Activated T-helper 2 cell treated with anti-CD3 and anti-CD28 coated beads, Interferon-gamma antibody, Interleukin-2, Interleukin-4, amounts not matched to agents 10 μg/mL and 5 μg/mL and 100 μg/mL, durations not matched to agents 14 hours and 24 hours and 36 hours (primary cell): ENCODE measurements at regions of chr1 and their contacts with region 1.

Region 1: GRCh38 chr1:86380257-86380861 is 15.8 kb downstream of the ODF2L start:
- DNase-seq: no peak
- H3K4me3 Mint-ChIP-seq: no peak overlapping the region
- H3K27ac Mint-ChIP-seq: no peak overlapping the region
- H3K4me1 Mint-ChIP-seq: peaks cover 11% of the 10 kb centered on the region
- H3K27me3 Mint-ChIP-seq: no peaks in the 10 kb centered on the region

Region 2: GRCh38 chr1:86339014-86339812 is 41.1 kb before region 1 on chr1:
- intact Hi-C with region 1: no loop called
- DNase-seq: no peak
- H3K4me3 Mint-ChIP-seq: no peak overlapping the region
- H3K27ac Mint-ChIP-seq: no peak overlapping the region
- H3K4me1 Mint-ChIP-seq: no peaks in the 10 kb centered on the region
- H3K27me3 Mint-ChIP-seq: no peaks in the 10 kb centered on the region

Region 3: DNA sequence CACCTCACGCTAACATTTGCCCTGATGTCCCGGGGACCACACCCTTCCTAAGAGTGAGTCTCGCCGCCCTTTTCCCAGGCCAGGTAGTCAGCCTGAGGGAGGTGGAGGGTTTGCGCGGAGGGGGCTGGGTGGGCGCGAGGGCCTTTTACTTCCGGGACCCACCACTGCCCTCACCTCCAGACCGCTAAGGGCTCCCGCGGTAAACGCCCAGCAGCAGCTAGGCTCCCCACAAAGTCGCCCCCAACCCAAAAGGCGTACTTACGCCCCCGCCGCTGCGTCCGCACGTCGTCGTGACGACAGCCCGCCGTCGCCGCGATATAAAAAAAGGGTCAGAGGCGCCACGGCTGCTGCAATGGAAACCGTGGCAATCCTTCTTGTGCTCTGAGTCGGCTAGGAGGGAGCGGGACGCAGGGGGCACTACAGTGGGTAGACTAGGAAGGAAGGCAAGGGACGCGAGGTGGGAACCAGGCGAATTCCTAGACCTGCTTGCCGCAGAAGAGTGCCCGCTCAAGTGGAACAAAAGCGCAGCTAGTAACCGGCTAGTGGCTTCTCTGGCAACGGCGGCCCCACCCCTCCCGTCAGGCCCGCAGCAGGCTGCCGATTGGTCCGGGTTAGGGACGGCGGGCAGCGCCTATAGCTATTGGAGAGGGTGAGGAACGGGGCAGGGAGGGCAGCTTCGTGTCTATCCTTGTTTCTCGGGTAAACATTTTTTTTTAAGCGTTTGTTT is 15.6 kb after region 1 on chr1 and contains the start of gene ODF2L:
- intact Hi-C with region 1: loop called (anchors 1 kb)
- DNase-seq: peak; percentile 88
- H3K4me3 Mint-ChIP-seq: peak within 1 kb of the TSS; percentile 89
- H3K27ac Mint-ChIP-seq: peak within 1 kb of the TSS; percentile 85
- H3K4me1 Mint-ChIP-seq: peaks cover 33% of the 10 kb centered on the region
- H3K27me3 Mint-ChIP-seq: peaks cover 10% of the 10 kb centered on the region
- total RNA-seq, gene ODF2L: 21.8 and 22.5 TPM in 2 replicates

Region 4: GRCh38 chr1:86470859-86471258 is 90.5 kb after region 1 on chr1:
- intact Hi-C with region 1: loop called (anchors 1 kb)
- DNase-seq: no peak
- H3K4me3 Mint-ChIP-seq: no peak overlapping the region
- H3K27ac Mint-ChIP-seq: no peak overlapping the region
- H3K4me1 Mint-ChIP-seq: no peaks in the 10 kb centered on the region
- H3K27me3 Mint-ChIP-seq: peaks cover 9% of the 10 kb centered on the region

Region 5: GRCh38 chr1:86499987-86500593 is 119.7 kb after region 1 on chr1:
- intact Hi-C with region 1: loop called (anchors 1 kb)
- DNase-seq: no peak
- H3K4me3 Mint-ChIP-seq: no peak overlapping the region
- H3K27ac Mint-ChIP-seq: no peak overlapping the region
- H3K4me1 Mint-ChIP-seq: peaks cover 14% of the 10 kb centered on the region
- H3K27me3 Mint-ChIP-seq: peaks cover 37% of the 10 kb centered on the region

Region 6: GRCh38 chr1:86573763-86574484 is 193.6 kb after region 1 on chr1:
- intact Hi-C with region 1: no loop called
- DNase-seq: no peak
- H3K4me3 Mint-ChIP-seq: no peak overlapping the region
- H3K27ac Mint-ChIP-seq: no peak overlapping the region
- H3K4me1 Mint-ChIP-seq: no peaks in the 10 kb centered on the region
- H3K27me3 Mint-ChIP-seq: no peaks in the 10 kb centered on the region